Activated CD4-positive, alpha-beta memory T cell treated with anti-CD3 and anti-CD28 coated beads for 36 hours (primary cell): ENCODE measurements at regions of chr2 and their contacts with region 1.

Region 1: GRCh38 chr2:237154082-237154638 is 68.5 kb downstream of the COPS8 start:
- DNase-seq: peak; percentile 76
- H3K4me3 Mint-ChIP-seq: no peak overlapping the region
- H3K27ac Mint-ChIP-seq: no peak overlapping the region
- H3K4me1 Mint-ChIP-seq: peaks cover 44% of the 10 kb centered on the region
- H3K27me3 Mint-ChIP-seq: peaks cover 4% of the 10 kb centered on the region

Region 2: DNA sequence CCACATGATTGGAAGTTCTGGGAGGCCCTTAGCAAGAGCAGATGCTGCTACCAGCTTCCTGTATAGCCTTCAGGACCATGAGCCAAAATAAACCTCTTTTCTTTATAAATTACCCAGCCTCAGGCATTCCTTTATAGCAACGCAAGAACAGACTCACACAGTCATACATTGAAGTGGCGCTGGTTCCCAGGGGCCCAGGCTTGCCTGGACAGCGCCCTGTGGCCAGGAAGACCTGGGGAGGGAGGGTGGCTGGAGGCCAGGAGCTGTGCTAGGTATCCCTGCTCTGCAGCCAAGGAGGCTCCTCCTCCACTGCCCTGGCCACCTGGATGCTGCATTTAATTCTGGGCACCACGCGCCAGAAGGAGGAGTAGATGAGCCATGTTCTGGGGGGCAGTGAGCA is 1562.2 kb before region 1 on chr2:
- CTCF ChIA-PET with region 1: no interaction called
- POLR2A ChIA-PET with region 1: no interaction called
- intact Hi-C with region 1: no loop called
- DNase-seq: no peak
- H3K4me3 Mint-ChIP-seq: no peak overlapping the region
- H3K27ac Mint-ChIP-seq: no peak overlapping the region
- H3K4me1 Mint-ChIP-seq: no peaks in the 10 kb centered on the region
- H3K27me3 Mint-ChIP-seq: peaks cover 4% of the 10 kb centered on the region

Region 3: DNA sequence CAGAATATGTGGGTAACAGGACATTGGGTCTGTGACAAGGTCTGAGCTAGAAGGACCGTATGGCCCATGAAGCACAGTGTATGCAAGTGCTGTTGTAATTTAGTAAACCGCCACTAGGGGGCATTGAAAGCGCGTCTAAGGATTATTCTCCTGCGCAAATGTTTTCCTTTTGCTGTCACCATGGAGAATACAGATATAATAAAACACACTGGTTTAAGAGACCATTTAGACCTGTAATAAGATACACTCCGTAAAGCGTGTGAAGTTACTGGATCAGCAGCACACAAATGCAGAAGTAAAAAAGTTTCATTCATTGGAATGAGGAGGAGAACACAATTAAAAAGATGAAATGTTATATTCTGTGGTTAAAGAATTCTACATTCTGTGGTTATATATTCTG is 1387.9 kb before region 1 on chr2:
- CTCF ChIA-PET with region 1: no interaction called
- POLR2A ChIA-PET with region 1: no interaction called
- intact Hi-C with region 1: no loop called
- DNase-seq: peak; percentile 58
- H3K4me3 Mint-ChIP-seq: no peak overlapping the region
- H3K27ac Mint-ChIP-seq: no peak overlapping the region
- H3K4me1 Mint-ChIP-seq: peaks cover 2% of the 10 kb centered on the region
- H3K27me3 Mint-ChIP-seq: peaks cover 5% of the 10 kb centered on the region

Region 4: DNA sequence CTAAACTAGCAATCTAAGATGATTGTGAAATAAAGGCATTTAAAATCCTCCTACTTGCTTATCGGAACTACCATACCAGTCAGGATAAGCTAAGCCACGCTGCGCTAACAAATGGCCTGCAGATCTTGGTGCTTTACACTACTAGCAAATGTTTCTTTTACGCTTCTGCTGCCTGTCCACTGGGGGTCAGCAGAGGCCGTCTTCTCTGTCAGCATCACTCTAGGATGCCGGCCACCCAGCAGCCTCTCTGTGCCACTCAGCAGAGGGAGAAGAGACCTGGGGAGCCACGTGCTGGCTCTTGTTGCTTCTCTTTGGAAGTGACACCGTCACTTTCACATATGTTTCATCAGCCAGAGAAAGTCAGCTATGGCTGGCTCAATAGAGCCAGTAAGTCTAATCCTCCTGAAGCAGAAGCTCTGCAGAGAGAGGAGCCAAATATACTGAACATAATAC is 31.9 kb before region 1 on chr2:
- CTCF ChIA-PET with region 1: interaction called, 5 read pairs
- POLR2A ChIA-PET with region 1: no interaction called
- intact Hi-C with region 1: loop called (anchors 2 kb)
- DNase-seq: peak; percentile 81
- H3K4me3 Mint-ChIP-seq: no peak overlapping the region
- H3K27ac Mint-ChIP-seq: no peak overlapping the region
- H3K4me1 Mint-ChIP-seq: peaks cover 3% of the 10 kb centered on the region
- H3K27me3 Mint-ChIP-seq: no peaks in the 10 kb centered on the region

Region 5: DNA sequence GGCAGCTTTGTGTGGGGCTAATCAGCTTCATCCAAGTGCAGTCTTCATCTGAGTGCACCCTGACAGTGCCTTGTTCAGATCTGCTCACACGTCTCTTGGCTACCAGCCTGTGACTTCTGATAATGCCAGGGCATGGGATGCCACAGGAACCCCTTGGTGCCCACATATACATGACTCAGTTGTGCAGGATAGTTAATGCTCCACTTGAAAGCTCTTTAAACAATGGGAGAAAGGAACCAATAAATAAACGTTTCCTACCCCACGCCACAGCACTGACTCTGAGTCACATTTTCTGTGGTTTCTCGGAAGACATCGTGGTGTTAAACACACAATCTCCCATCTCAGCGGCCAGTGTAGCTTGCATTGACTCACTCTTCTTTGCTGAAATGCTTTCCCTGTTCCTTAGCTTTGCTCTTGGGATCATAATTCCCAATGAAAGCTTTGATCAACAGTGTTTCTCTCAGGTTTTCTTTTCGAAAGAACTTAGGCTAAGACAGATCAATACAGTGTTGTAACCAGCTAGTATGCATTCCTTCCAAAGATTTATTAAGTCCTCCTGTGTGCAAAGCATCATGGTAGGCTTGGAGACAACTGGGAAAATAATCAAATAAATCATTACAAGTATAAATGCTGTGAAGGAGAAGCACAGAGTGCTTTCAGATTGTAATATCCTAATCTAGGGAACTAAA is 73.6 kb after region 1 on chr2:
- CTCF ChIA-PET with region 1: no interaction called
- POLR2A ChIA-PET with region 1: no interaction called
- intact Hi-C with region 1: loop called (anchors 2 kb)
- DNase-seq: peak; percentile 54
- H3K4me3 Mint-ChIP-seq: no peak overlapping the region
- H3K27ac Mint-ChIP-seq: no peak overlapping the region
- H3K4me1 Mint-ChIP-seq: peaks cover 11% of the 10 kb centered on the region
- H3K27me3 Mint-ChIP-seq: peaks cover 23% of the 10 kb centered on the region

Region 6: DNA sequence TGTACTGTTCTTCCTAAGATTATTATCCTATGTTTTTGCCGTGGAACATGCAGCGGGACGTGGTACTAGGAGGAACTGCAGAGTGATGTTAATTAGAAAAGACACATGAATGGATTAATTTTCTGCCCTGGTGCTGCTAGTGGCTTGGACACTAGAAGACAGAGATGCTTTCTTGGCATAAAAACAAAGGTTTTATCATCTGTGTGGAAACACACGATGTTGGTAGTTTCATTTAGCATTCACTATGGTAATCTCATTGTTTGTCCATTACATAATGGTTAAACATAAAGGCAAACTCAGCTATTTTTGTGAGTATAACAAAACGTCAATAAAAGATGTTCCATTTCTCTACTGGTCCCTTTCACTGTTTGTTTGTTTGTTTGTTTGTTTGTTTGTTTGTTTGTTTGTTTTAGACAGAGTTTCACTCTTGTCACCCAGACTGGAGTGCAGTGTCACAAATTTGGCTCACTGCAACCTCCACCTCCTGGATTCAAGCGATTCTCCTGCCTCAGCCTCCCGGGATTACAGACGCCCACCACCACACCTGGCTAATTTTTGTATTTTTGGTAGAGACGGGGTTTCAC is 237.1 kb after region 1 on chr2:
- CTCF ChIA-PET with region 1: no interaction called
- POLR2A ChIA-PET with region 1: no interaction called
- intact Hi-C with region 1: no loop called
- DNase-seq: no peak
- H3K4me3 Mint-ChIP-seq: no peak overlapping the region
- H3K27ac Mint-ChIP-seq: no peak overlapping the region
- H3K4me1 Mint-ChIP-seq: no peaks in the 10 kb centered on the region
- H3K27me3 Mint-ChIP-seq: no peaks in the 10 kb centered on the region

Region 7: DNA sequence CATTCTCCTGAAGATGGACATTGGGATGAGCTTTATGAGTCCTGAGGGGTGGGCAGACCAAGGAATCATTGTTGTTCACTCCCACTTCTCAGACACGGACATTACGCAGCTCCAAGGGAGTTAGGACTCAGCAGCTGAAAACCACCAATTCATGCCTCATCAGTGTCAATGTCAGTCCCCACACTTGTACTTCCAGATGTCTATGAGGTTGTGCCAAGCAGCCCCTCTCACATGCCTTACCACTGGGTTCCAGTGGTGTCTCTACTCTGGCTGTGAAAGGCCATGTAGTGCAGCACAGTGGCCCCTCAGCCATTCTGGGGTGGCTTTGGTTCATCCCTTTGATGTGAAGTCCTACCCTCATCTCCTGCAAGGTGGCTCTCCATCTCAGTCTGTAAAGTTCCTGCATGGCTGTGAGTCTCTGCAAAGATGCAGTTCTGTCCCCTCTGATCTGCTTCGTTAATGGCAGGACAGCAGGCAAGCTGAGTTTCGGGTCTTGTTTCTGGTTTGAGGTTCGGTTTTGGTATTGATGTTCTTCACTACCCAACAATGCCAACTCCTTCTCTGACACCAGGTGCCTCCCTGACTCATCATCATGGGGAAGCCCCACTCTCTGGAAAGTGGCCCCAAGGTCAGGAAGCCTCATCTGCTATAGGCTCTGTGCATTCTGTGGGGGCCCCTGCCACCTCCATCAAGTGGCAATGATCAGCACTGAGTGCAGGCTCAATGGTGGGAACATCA is 273.8 kb after region 1 on chr2:
- CTCF ChIA-PET with region 1: interaction called, 3 read pairs
- POLR2A ChIA-PET with region 1: no interaction called
- intact Hi-C with region 1: loop called (anchors 1 kb)
- DNase-seq: peak; percentile 92
- H3K4me3 Mint-ChIP-seq: peak overlapping the region; percentile 55
- H3K27ac Mint-ChIP-seq: peak overlapping the region; percentile 91
- H3K4me1 Mint-ChIP-seq: peaks cover 72% of the 10 kb centered on the region
- H3K27me3 Mint-ChIP-seq: peaks cover 1% of the 10 kb centered on the region

Region 8: DNA sequence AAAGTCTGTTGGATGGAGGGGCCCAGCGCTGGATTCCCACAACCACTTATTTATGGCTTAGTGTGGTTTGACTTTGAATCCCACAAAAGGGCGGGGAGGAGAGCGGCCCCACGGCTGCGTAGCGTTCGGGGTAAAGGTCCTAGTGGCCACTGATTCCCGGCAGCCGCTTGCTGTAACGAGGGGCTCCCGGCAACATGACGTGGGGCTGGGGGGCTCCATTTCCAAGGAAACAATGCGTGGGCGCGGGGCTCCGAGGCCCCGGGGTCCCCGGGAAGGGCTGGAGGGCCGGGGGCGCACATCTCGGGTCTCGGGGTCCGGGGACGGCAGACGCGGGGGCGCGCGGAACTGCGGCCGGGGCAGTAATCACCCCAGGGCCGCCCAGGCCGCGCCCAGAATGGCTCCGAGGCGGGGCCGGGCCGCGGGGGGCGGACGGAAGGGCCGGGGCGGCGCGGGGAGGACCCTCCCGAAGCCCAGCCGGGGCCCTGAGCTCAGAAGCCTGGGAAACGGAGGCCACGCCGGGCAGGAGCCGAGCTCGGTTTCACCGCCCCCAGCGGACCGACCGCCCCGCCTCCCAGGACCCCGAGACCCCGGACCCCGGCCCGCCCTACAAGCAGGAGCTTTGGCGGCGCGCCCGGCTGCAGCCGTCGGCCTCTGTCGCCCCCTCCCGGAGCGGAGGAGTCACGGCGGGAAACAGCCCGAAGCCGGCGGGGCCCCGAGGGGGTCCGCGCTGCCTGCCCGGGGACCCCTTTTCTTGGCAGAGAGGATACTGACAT is 321.0 kb after region 1 on chr2:
- CTCF ChIA-PET with region 1: interaction called, 16 read pairs
- POLR2A ChIA-PET with region 1: no interaction called
- intact Hi-C with region 1: loop called (anchors 1 kb)
- DNase-seq: peak; percentile 79
- H3K4me3 Mint-ChIP-seq: peak overlapping the region; percentile 68
- H3K27ac Mint-ChIP-seq: peak overlapping the region; percentile 78
- H3K4me1 Mint-ChIP-seq: peaks cover 10% of the 10 kb centered on the region
- H3K27me3 Mint-ChIP-seq: peaks cover 18% of the 10 kb centered on the region

Region 9: GRCh38 chr2:237691908-237692600 is 537.9 kb after region 1 on chr2:
- CTCF ChIA-PET with region 1: no interaction called
- POLR2A ChIA-PET with region 1: no interaction called
- intact Hi-C with region 1: loop called (anchors 10 kb)
- DNase-seq: peak; percentile 96
- H3K4me3 Mint-ChIP-seq: peak overlapping the region; percentile 98
- H3K27ac Mint-ChIP-seq: peak overlapping the region; percentile 99
- H3K4me1 Mint-ChIP-seq: peaks cover 62% of the 10 kb centered on the region
- H3K27me3 Mint-ChIP-seq: no peaks in the 10 kb centered on the region